ENCODE measurements at regions of chr4 and their contacts with region 1.

Region 1: DNA sequence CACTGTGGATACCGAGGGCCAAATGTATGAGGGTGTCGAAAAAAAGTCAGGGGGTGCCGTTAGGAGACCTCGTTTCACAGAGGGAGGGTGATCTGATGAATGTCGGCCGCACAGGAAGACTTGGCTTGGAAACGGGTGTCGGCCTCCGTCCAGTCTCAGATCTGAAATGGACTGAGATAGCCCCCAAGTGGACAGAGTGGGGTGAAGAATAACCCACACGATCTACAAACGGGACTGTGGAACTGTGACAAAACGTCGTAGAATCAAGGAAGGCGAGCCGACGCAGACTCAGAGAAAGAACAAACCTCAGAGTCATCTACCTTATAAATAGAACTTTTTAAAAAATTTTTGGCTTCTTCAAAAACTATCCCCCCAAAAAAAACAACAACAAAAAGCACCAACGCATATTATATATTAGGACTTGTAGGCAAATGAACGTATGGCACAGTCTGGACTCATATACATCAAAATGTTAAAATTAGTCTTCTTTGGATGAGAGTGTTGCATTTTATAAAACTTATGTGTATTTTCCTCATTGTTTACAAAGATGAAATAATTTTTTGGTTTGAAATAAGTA is 63.8 kb upstream of the IRF2 start:
- DNase-seq: peak; percentile 54
- ATAC-seq: peak; percentile 68
- H3K4me3 Mint-ChIP-seq: peak overlapping the region; percentile 96
- H3K27ac Mint-ChIP-seq: peak overlapping the region; percentile 100
- H3K4me1 Mint-ChIP-seq: peaks cover 49% of the 10 kb centered on the region
- H3K27me3 Mint-ChIP-seq: no peaks in the 10 kb centered on the region
- CTCF ChIP-seq: no peak

Region 2: GRCh38 chr4:183214912-183215488 is 1323.1 kb before region 1 on chr4:
- CTCF ChIA-PET with region 1: no interaction called
- POLR2A ChIA-PET with region 1: no interaction called
- intact Hi-C with region 1: no loop called
- DNase-seq: no peak
- ATAC-seq: no peak
- H3K4me3 Mint-ChIP-seq: no peak overlapping the region
- H3K27ac Mint-ChIP-seq: no peak overlapping the region
- H3K4me1 Mint-ChIP-seq: no peaks in the 10 kb centered on the region
- H3K27me3 Mint-ChIP-seq: peaks cover 5% of the 10 kb centered on the region
- CTCF ChIP-seq: no peak

Region 3: DNA sequence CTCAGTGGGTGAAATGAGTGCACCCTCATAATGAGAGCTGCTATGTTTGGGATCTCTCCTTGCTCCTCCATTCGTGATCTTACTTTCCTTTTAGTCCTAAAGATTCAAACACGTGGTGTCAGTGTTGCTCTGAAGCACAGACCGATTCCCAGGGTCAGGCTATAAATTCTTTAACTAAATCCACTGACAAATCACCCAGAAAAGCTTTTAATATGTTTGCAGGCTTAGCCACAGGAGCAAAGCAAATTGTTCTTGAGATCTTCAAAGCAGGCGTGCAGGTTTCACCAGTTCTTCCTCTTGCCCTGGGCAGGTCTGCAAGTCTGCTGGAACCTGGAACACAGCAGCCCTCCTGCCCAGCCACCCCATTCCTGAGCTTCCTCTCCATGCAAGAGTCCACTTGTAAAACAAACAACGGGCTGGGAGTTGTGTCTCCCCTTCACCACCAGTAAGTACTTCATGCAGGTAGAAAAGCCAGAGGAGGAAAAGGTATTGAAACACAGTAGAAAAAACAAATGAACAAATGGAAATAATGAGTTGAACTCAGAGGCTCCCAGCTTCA is 250.3 kb before region 1 on chr4:
- CTCF ChIA-PET with region 1: interaction called, 5 read pairs
- POLR2A ChIA-PET with region 1: interaction called, 17 read pairs
- intact Hi-C with region 1: loop called (anchors 1 kb)
- DNase-seq: no peak
- ATAC-seq: no peak
- H3K4me3 Mint-ChIP-seq: peak overlapping the region; percentile 77
- H3K27ac Mint-ChIP-seq: peak overlapping the region; percentile 91
- H3K4me1 Mint-ChIP-seq: peaks cover 61% of the 10 kb centered on the region
- H3K27me3 Mint-ChIP-seq: no peaks in the 10 kb centered on the region
- CTCF ChIP-seq: no peak

Region 4: GRCh38 chr4:184329659-184330400 is 208.3 kb before region 1 on chr4:
- CTCF ChIA-PET with region 1: no interaction called
- POLR2A ChIA-PET with region 1: interaction called, 36 read pairs
- intact Hi-C with region 1: loop called (anchors 1 kb)
- DNase-seq: no peak
- ATAC-seq: peak; percentile 26
- H3K4me3 Mint-ChIP-seq: peak overlapping the region; percentile 47
- H3K27ac Mint-ChIP-seq: peak overlapping the region; percentile 97
- H3K4me1 Mint-ChIP-seq: peaks cover 78% of the 10 kb centered on the region
- H3K27me3 Mint-ChIP-seq: no peaks in the 10 kb centered on the region
- CTCF ChIP-seq: no peak

Region 5: GRCh38 chr4:184384056-184384809 is 153.9 kb before region 1 on chr4:
- CTCF ChIA-PET with region 1: no interaction called
- POLR2A ChIA-PET with region 1: interaction called, 4 read pairs
- intact Hi-C with region 1: loop called (anchors 2 kb)
- DNase-seq: no peak
- ATAC-seq: peak; percentile 36
- H3K4me3 Mint-ChIP-seq: peak overlapping the region; percentile 72
- H3K27ac Mint-ChIP-seq: peak overlapping the region; percentile 79
- H3K4me1 Mint-ChIP-seq: peaks cover 88% of the 10 kb centered on the region
- H3K27me3 Mint-ChIP-seq: no peaks in the 10 kb centered on the region
- CTCF ChIP-seq: no peak

Region 6: GRCh38 chr4:184417802-184418511 is 120.2 kb before region 1 on chr4:
- CTCF ChIA-PET with region 1: interaction called, 3 read pairs
- POLR2A ChIA-PET with region 1: interaction called, 9 read pairs
- intact Hi-C with region 1: loop called (anchors 1 kb)
- DNase-seq: no peak
- ATAC-seq: peak; percentile 65
- H3K4me3 Mint-ChIP-seq: peak overlapping the region; percentile 55
- H3K27ac Mint-ChIP-seq: peak overlapping the region; percentile 89
- H3K4me1 Mint-ChIP-seq: peaks cover 81% of the 10 kb centered on the region
- H3K27me3 Mint-ChIP-seq: no peaks in the 10 kb centered on the region
- CTCF ChIP-seq: no peak

Region 7: DNA sequence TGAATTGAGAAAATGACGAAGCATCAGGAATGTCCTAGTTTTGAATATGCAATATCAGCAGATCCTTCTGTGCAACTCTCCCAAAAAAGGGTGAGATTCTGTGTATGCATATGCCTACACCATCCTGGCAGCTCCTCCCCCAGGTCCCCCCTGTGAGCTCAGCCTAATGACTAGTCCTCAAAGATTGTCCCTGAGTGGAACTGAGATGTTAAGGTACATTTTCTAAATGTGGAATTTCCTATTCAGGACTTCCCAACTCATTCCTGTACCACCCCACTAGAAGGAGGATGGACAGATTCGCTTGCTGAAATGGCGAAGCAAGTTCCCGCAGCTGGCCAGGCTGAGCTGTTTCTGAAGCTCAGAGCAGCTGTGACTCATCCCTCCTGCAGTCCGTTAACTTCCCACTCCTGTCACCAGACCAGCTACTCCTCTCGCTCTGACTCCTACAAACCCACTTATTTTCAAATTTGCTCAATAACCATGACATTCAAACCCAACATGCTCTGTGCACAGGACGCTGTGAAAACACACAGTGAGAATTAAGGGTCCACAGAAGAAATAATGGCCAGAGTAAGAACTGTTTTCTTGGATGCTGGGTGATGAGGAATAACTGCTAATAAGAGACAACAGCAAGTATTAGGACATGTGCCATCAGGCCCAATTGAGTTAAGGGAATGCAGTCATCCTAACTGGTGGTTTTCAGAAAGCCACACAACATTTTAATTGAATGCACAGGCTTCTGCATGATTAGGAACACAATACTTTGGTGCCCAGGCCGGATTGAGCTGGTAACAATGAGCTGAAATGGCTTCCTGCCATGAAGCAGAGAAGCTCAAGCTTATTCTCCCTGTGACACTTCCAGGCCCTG is 23.8 kb before region 1 on chr4:
- CTCF ChIA-PET with region 1: interaction called, 7 read pairs
- POLR2A ChIA-PET with region 1: interaction called, 13 read pairs
- intact Hi-C with region 1: loop called (anchors 1 kb)
- DNase-seq: no peak
- ATAC-seq: peak; percentile 90
- H3K4me3 Mint-ChIP-seq: peak overlapping the region; percentile 32
- H3K27ac Mint-ChIP-seq: peak overlapping the region; percentile 54
- H3K4me1 Mint-ChIP-seq: peaks cover 31% of the 10 kb centered on the region
- H3K27me3 Mint-ChIP-seq: no peaks in the 10 kb centered on the region
- CTCF ChIP-seq: no peak

Region 8: GRCh38 chr4:185039508-185040273 is 501.6 kb after region 1 on chr4:
- CTCF ChIA-PET with region 1: no interaction called
- POLR2A ChIA-PET with region 1: no interaction called
- intact Hi-C with region 1: no loop called
- DNase-seq: no peak
- ATAC-seq: peak; percentile 74
- H3K4me3 Mint-ChIP-seq: peak overlapping the region; percentile 24
- H3K27ac Mint-ChIP-seq: no peak overlapping the region
- H3K4me1 Mint-ChIP-seq: peaks cover 5% of the 10 kb centered on the region
- H3K27me3 Mint-ChIP-seq: peaks cover 10% of the 10 kb centered on the region
- CTCF ChIP-seq: no peak

Measured in activated B cell treated with CpG ODN at 0.5 μM for 24 hours (primary cell).